Dorsolateral prefrontal cortex (tissue), 120 donors: ENCODE measurements at regions of chr4 and their contacts with region 1.

Region 1: GRCh38 chr4:15100994-15101695 is 98.9 kb downstream of the CPEB2 start:
- DNase-seq: peak in 5 of 10 donors; percentile 4 to 58 (median 50)
- H3K4me3 ChIP-seq: peak overlapping the region in 32 of 59 donors; percentile 6 to 58 (median 26)
- H3K27ac ChIP-seq: peak overlapping the region in 58 of 59 donors; percentile 42 to 93 (median 85)
- H3K27me3 ChIP-seq: no peaks in the 10 kb centered on the region
- CTCF ChIP-seq: peak in 1 of 56 donors; percentile 10

Region 2: GRCh38 chr4:15043226-15043625 is 57.9 kb before region 1 on chr4:
- intact Hi-C with region 1: loop called in 1 of 2 experiments (anchors 5 kb)
- DNase-seq: no peak
- H3K4me3 ChIP-seq: peak overlapping the region in 1 of 59 donors; percentile 6
- H3K27ac ChIP-seq: peak overlapping the region in 56 of 59 donors; percentile 3 to 89 (median 77)
- H3K27me3 ChIP-seq: no peaks in the 10 kb centered on the region
- CTCF ChIP-seq: peak in 49 of 56 donors; percentile 20 to 73 (median 50)

Region 3: DNA sequence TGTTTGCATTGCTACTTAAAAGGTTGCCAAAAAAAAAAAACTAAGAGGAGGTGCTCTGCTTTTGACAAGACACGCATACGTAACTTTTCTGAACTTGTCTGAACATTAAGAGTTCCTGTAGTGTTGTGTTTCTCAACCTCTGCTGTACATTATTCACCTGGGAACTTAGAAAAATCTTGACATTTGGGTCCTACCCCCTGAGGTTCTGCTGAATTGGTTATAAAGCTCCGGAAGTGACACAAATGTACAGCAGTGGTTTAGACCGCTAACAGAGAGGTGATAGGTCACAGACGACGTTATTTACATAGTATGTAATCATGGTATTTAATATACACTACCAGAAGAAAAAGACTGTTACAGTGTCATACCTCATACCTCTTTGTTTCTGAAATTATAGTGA is 37.8 kb before region 1 on chr4:
- intact Hi-C with region 1: loop called in 1 of 2 experiments (anchors 5 kb)
- DNase-seq: no peak
- H3K4me3 ChIP-seq: no peak overlapping the region
- H3K27ac ChIP-seq: peak overlapping the region in 27 of 59 donors; percentile 2 to 74 (median 21)
- H3K27me3 ChIP-seq: no peaks in the 10 kb centered on the region
- CTCF ChIP-seq: no peak

Region 4: GRCh38 chr4:15149839-15150476 is 48.8 kb after region 1 on chr4:
- intact Hi-C with region 1: loop called in 1 of 2 experiments (anchors 2 kb)
- DNase-seq: peak; percentile 74 to 94 (median 90)
- H3K4me3 ChIP-seq: peak overlapping the region in 5 of 59 donors; percentile 4 to 24 (median 15)
- H3K27ac ChIP-seq: peak overlapping the region; percentile 52 to 98 (median 94)
- H3K27me3 ChIP-seq: no peaks in the 10 kb centered on the region
- CTCF ChIP-seq: peak in 32 of 56 donors; percentile 8 to 51 (median 34)

Region 5: DNA sequence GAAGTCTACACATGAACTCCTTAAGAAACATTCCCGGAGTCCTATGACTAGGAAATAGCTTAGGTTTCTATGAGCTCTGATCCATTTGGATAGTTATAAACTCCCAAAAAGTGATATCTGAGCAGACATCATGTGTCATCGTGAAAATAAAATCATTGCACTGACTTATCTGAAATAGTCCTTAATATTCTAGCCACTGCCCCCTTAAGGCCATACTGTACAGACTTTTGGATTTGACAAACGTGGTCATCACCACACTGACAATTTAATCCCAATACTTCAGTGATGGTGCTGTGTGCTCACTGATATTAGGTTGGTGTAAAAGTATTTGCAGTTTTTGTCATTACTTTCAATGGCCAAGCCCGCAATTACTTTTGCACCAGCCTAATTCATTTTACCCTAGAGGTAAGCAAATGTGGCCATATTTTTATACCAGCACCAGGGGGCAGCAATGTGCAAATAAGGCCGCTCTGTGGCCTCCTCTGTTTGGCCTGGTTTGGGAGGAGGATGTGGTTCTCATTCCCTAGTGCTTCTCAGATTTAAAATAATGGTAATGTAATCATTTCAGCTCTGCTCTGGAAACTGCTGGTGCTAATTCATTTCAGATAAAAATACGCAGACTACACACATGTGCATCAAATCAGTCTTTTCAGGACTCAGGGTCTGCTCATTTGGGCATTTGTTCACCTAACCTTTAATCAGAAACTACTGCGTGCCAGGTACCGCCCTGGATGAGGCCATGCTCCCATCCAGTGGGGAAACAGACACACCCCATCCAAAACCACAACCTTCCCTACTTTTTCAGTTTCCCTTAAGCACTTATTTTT is 130.3 kb after region 1 on chr4:
- intact Hi-C with region 1: no loop called
- DNase-seq: peak in 9 of 10 donors; percentile 41 to 82 (median 67)
- H3K4me3 ChIP-seq: no peak overlapping the region
- H3K27ac ChIP-seq: peak overlapping the region in 3 of 59 donors; percentile 6 to 78 (median 21)
- H3K27me3 ChIP-seq: no peaks in the 10 kb centered on the region
- CTCF ChIP-seq: peak; percentile 61 to 92 (median 78)